Ovary (tissue), 10 donors: ENCODE measurements at regions of chr12 and their contacts with region 1.

Region 1: DNA sequence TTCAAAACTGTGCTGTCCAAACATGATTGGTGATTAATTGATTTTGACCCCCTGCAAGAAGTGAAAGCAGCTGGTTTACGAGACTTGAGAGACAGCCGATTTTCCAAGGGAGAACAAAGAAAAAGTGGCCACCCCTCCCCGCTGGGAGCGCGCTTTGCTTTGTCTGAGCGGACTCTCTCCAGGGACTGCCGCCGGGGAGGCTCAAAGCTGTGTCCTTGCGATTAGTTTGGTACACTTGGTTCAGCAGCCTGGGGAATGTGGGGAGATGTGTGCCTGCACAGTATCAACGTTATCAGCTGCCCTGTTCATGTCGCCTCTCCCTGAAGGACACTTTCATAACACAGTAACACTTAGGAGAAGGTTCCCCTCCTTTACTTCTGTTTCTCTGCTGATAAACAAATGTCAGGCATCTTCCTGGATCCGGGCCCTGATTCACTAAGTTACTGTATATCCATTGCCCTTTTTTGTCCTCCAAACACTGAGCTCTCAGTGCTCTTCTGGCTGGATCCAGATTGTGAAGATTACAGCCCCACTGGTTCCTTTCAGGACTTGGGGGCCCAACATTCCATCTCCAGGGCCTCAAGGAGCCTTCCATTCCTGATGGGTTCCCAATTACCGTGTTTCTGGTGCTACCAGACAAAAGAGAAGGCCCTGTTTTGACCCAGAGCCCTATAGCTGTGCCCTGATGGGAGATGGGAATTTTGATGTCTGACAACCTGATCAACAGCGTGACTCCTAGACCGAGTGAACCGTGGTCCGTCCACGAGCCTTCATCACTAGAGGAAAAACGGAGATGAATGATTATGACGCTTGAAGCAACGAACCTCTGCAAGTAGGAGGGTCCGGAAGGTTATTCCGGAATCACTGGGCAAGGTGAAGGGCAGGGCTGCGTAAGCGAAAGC is 31.7 kb upstream of the TUBA1C start:
- DNase-seq: peak; percentile 60 to 75 (median 63)
- H3K4me3 ChIP-seq: no peak overlapping the region
- H3K27ac ChIP-seq: peak overlapping the region; percentile 81 to 95
- H3K4me1 ChIP-seq: peaks cover 1% of the 10 kb centered on the region
- H3K27me3 ChIP-seq: no peaks in the 10 kb centered on the region
- CTCF ChIP-seq: peak in 1 of 3 donors; percentile 26
- EP300 ChIP-seq: no peak
- POLR2A ChIP-seq: no peak

Region 2: DNA sequence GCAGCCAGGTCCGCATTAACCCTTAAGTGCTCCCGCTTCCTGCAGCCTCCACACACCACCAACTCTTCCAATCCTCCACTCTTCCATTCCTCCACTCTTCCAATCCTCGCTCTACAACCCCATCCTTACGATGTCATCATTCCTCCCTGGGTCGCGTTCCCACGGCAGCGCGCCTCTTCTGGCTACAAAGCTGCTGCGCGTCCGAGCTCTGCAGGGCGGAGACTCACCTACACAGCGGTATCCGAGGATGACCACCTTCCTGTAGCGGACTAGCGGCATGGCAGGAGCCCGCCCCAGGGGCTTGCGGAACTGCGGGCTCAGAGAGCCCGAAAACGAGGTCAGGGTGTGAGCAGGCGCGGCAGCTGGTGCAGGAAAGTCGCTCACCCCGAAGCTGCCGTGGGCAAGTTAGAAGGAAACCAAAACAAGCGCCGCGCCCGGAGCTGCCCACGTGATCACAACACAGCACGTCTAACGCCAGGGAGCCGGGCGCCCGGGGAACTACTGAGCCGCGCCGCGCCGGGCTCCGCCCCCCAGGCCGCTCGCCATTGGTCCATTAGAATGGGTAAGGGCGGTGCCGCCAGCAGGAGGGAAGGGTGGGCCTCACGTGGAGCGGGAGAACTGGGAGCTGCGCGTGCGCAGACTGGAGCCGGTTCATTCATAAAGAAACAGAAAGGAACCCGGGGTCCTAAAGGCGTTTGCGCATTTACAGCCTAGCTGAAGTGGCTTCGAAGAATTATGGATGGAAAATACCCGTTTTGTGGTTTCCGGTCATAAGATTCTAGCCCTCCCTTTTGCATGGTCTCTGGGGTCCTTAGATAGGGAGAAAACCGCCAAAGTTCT is 163.5 kb before region 1 on chr12 and contains the start of gene RHEBL1:
- intact Hi-C with region 1: loop called in 1 of 4 experiments (anchors 10 kb)
- DNase-seq: peak; percentile 97 to 99 (median 98)
- H3K4me3 ChIP-seq: peak within 1 kb of the TSS; percentile 58
- H3K27ac ChIP-seq: peak within 1 kb of the TSS in 1 of 2 donors; percentile 41
- H3K4me1 ChIP-seq: peaks cover 2% of the 10 kb centered on the region
- H3K27me3 ChIP-seq: no peaks in the 10 kb centered on the region
- CTCF ChIP-seq: no peak
- EP300 ChIP-seq: no peak
- POLR2A ChIP-seq: no peak
- total RNA-seq, gene RHEBL1: 0.18 to 0.60 (median 0.34) TPM in 5 of 7 donors, not detected in the others

Region 3: GRCh38 chr12:49088190-49088931 is 144.8 kb before region 1 on chr12:
- intact Hi-C with region 1: loop called in 3 of 4 experiments (anchors 5 to 10 kb)
- DNase-seq: peak; percentile 70 to 79 (median 74)
- H3K4me3 ChIP-seq: no peak overlapping the region
- H3K27ac ChIP-seq: no peak overlapping the region
- H3K4me1 ChIP-seq: peaks cover 13% of the 10 kb centered on the region
- H3K27me3 ChIP-seq: peaks cover 2% of the 10 kb centered on the region
- CTCF ChIP-seq: peak; percentile 78 to 85 (median 84)
- EP300 ChIP-seq: no peak
- POLR2A ChIP-seq: no peak

Region 4: DNA sequence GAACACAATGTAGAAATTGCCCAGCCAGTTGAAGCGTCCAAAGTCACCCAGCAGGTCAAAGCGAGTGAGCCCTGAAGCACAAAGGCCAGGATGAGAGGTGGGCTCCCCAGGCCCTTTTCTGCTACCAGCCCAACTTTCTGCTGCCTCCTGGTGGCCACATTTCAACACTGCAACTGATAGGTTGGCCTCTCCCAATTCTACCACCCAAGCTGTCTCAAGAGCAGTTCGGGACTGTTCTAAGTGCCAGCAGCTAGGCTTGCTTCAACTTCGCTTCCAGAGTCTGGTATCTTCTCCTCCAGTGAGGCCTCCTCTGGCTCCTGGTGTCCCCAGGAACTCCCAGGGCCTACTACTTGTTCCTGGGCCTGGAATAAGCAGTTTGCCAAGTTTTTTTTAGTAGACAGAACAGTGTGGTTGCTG is 135.1 kb before region 1 on chr12:
- intact Hi-C with region 1: loop called in 2 of 4 experiments (anchors 5 to 10 kb)
- DNase-seq: peak in 2 of 5 donors; percentile 49 to 55
- H3K4me3 ChIP-seq: no peak overlapping the region
- H3K27ac ChIP-seq: no peak overlapping the region
- H3K4me1 ChIP-seq: no peaks in the 10 kb centered on the region
- H3K27me3 ChIP-seq: peaks cover 3% of the 10 kb centered on the region
- CTCF ChIP-seq: peak; percentile 31 to 54 (median 53)
- EP300 ChIP-seq: no peak
- POLR2A ChIP-seq: no peak

Region 5: GRCh38 chr12:49130151-49131050 is 102.8 kb before region 1 on chr12:
- intact Hi-C with region 1: loop called in 2 of 4 experiments (anchors 2 kb)
- DNase-seq: peak; percentile 93 to 96 (median 94)
- H3K4me3 ChIP-seq: peak overlapping the region; percentile 65
- H3K27ac ChIP-seq: peak overlapping the region; percentile 93 to 98
- H3K4me1 ChIP-seq: peaks cover 6% of the 10 kb centered on the region
- H3K27me3 ChIP-seq: no peaks in the 10 kb centered on the region
- CTCF ChIP-seq: peak; percentile 72 to 91 (median 88)
- EP300 ChIP-seq: peak; percentile 38
- POLR2A ChIP-seq: peak; percentile 1

Region 6: GRCh38 chr12:49188914-49189367 is 44.2 kb before region 1 on chr12 and contains the start of gene TUBA1A:
- intact Hi-C with region 1: loop called in 3 of 4 experiments (anchors 2 to 5 kb)
- DNase-seq: peak; percentile 90 to 96 (median 91)
- H3K4me3 ChIP-seq: peak within 1 kb of the TSS; percentile 77
- H3K27ac ChIP-seq: peak within 1 kb of the TSS; percentile 94 to 95
- H3K4me1 ChIP-seq: peaks cover 3% of the 10 kb centered on the region
- H3K27me3 ChIP-seq: no peaks in the 10 kb centered on the region
- CTCF ChIP-seq: no peak
- EP300 ChIP-seq: peak; percentile 12
- POLR2A ChIP-seq: peak; percentile 94
- total RNA-seq, gene TUBA1A: 140 to 247 (median 184) TPM